Activated T-helper 1 cell treated with anti-CD3 and anti-CD28 coated beads, Interleukin-12 subunit alpha, Interleukin-12 subunit beta, Interleukin-2, Interleukin-4 antibody, amounts not matched to agents 30 ng/mL and 10 ng/mL and 1 ng/mL, durations not matched to agents 14 hours and 24 hours and 36 hours (primary cell): ENCODE measurements at regions of chr4 and their contacts with region 1.

Region 1: GRCh38 chr4:108053251-108053711 is 63.6 kb downstream of the HADH start:
- DNase-seq: no peak
- H3K4me3 Mint-ChIP-seq: peak overlapping the region; percentile 52
- H3K27ac Mint-ChIP-seq: peak overlapping the region; percentile 85
- H3K4me1 Mint-ChIP-seq: peaks cover 82% of the 10 kb centered on the region
- H3K27me3 Mint-ChIP-seq: no peaks in the 10 kb centered on the region

Region 2: GRCh38 chr4:108072300-108072699 is 19.0 kb after region 1 on chr4:
- intact Hi-C with region 1: loop called (anchors 2 kb)
- DNase-seq: peak; percentile 58
- H3K4me3 Mint-ChIP-seq: peak overlapping the region; percentile 50
- H3K27ac Mint-ChIP-seq: peak overlapping the region; percentile 81
- H3K4me1 Mint-ChIP-seq: peaks cover 73% of the 10 kb centered on the region
- H3K27me3 Mint-ChIP-seq: no peaks in the 10 kb centered on the region

Region 3: GRCh38 chr4:108094923-108095482 is 41.7 kb after region 1 on chr4:
- intact Hi-C with region 1: no loop called
- DNase-seq: no peak
- H3K4me3 Mint-ChIP-seq: peak overlapping the region; percentile 56
- H3K27ac Mint-ChIP-seq: peak overlapping the region; percentile 80
- H3K4me1 Mint-ChIP-seq: peaks cover 83% of the 10 kb centered on the region
- H3K27me3 Mint-ChIP-seq: no peaks in the 10 kb centered on the region